ENCODE measurements at regions of chr5 and their contacts with region 1.

Region 1: GRCh38 chr5:57137401-57137800 is 36.5 kb upstream of the GPBP1 start:
- DNase-seq: no peak
- H3K4me3 ChIP-seq: no peak overlapping the region
- H3K27ac ChIP-seq: no peak overlapping the region
- H3K4me1 ChIP-seq: no peaks in the 10 kb centered on the region
- CTCF ChIP-seq: no peak

Region 2: GRCh38 chr5:56900858-56901578 is 236.4 kb before region 1 on chr5:
- CTCF ChIA-PET with region 1: interaction called, 3 read pairs
- POLR2A ChIA-PET with region 1: no interaction called
- intact Hi-C with region 1: loop called (anchors 1 kb)
- DNase-seq: peak; percentile 65
- H3K4me3 ChIP-seq: no peak overlapping the region
- H3K27ac ChIP-seq: no peak overlapping the region
- H3K4me1 ChIP-seq: no peaks in the 10 kb centered on the region
- CTCF ChIP-seq: peak; percentile 88

Region 3: DNA sequence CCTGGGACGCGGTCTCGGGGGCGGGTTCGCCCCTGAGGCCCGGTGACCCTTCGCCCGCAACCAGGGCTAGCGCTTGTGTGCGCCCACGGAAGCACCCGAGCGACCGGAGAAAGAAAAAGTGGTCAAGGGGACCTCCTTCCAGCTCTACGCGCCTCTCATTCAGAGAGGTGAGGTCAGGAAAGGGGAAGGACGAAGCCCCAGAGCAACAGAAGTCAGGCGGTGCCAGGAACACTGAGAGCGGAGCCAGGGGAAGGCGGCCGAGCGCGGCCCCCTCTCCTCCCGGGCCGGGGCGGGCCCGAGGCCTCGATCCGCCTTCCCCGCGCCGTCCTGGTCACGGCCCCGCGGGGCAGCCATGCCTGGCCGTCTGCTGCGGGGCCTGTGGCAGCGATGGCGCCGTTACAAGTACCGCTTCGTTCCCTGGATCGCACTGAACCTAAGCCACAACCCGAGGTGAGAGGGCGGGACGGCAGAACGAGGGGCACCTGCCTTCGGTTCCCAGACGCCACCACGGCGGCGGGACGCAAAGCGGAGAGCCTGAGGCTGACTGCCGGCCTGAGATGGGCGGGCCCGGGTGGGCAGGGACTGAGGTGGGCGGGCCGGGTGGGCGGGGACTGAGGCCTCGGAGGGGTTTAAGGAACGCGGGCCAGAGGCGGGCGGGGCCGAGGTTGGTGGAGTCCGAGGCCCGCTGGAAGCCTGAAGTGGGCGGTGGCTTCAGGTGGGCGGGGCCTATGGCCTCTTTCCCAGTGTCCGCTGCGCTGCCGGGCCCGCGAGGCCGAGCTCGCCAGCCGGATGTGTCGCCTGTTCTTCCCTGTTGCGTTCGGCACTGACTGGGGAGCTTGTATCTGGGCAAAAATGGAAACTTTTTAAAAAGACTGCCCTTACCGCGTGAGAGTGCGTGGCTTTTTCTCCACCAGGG is 227.8 kb before region 1 on chr5 and contains the start of gene SETD9:
- CTCF ChIA-PET with region 1: no interaction called
- POLR2A ChIA-PET with region 1: no interaction called
- intact Hi-C with region 1: loop called (anchors 2 kb)
- DNase-seq: peak; percentile 98
- H3K4me3 ChIP-seq: peak within 1 kb of the TSS; percentile 76
- H3K27ac ChIP-seq: peak within 1 kb of the TSS; percentile 77
- H3K4me1 ChIP-seq: peaks cover 21% of the 10 kb centered on the region
- CTCF ChIP-seq: no peak
- total RNA-seq, gene SETD9: 5.0 and 6.7 TPM in 2 replicates

Region 4: GRCh38 chr5:56938858-56939257 is 198.5 kb before region 1 on chr5:
- CTCF ChIA-PET with region 1: no interaction called
- POLR2A ChIA-PET with region 1: interaction called, 10 read pairs
- intact Hi-C with region 1: no loop called
- DNase-seq: no peak
- H3K4me3 ChIP-seq: no peak overlapping the region
- H3K27ac ChIP-seq: no peak overlapping the region
- H3K4me1 ChIP-seq: no peaks in the 10 kb centered on the region
- CTCF ChIP-seq: no peak

Region 5: DNA sequence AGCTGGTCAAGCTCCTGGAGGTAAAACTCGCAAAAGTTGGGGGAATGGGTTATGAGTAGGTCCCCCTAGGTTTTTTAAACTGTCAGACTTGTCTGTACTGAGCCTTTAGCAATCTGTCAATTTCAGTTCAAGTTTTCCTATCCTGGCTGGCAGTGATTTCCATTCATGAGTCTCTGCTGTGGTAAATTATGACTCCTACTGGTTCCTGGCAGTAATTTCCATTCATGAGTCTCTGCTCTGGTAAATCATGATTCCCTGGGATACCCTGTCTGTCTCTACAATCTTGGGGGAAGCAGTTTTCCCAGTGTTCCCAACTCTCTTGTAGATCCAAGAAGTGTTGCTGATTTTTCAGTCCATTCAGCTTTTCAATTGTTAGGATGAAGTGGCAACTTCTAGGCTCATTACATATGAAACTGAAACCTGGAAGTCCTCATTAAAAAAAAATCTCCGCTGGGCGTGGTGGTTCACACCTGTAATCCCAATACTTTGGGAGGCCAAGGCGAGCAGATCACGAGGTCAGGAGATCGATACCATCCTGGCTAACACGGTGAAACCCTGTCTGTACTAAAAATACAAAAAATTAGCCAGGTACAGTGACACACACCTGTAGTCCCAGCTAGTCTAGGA is 54.8 kb before region 1 on chr5:
- CTCF ChIA-PET with region 1: no interaction called
- POLR2A ChIA-PET with region 1: no interaction called
- intact Hi-C with region 1: no loop called
- DNase-seq: peak; percentile 8
- H3K4me3 ChIP-seq: no peak overlapping the region
- H3K27ac ChIP-seq: no peak overlapping the region
- H3K4me1 ChIP-seq: no peaks in the 10 kb centered on the region
- CTCF ChIP-seq: peak; percentile 48

Region 6: DNA sequence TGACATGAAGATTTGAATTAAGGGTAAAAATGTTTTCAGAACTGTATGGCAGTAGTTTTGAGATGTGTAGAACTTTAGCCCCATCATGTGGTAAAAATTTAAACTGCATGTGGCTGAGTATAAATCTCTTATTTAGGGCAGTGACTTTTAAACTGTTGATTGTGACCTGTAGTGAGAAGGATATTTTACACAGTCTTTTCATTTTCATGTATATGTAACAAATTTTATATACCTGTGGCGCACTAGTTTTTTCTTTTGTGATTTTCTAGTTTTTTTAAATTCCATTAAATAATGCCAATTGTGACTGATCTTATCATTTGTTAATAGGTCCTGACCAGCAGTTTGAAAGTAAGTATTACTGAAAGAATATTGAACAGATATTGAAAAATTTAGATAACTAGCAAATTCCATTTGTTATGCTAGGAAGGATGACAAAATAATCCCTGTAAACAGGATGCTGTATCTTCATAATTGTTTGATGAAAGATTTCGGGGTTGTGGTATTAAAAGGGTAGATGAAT is 83.7 kb after region 1 on chr5:
- CTCF ChIA-PET with region 1: no interaction called
- POLR2A ChIA-PET with region 1: interaction called, 3 read pairs
- intact Hi-C with region 1: loop called (anchors 2 kb)
- DNase-seq: peak; percentile 68
- H3K4me3 ChIP-seq: no peak overlapping the region
- H3K27ac ChIP-seq: no peak overlapping the region
- H3K4me1 ChIP-seq: no peaks in the 10 kb centered on the region
- CTCF ChIP-seq: peak; percentile 98

Measured in OCI-LY7 (cell line).